ENCODE measurements at regions of chr4 and their contacts with region 1.

Region 1: DNA sequence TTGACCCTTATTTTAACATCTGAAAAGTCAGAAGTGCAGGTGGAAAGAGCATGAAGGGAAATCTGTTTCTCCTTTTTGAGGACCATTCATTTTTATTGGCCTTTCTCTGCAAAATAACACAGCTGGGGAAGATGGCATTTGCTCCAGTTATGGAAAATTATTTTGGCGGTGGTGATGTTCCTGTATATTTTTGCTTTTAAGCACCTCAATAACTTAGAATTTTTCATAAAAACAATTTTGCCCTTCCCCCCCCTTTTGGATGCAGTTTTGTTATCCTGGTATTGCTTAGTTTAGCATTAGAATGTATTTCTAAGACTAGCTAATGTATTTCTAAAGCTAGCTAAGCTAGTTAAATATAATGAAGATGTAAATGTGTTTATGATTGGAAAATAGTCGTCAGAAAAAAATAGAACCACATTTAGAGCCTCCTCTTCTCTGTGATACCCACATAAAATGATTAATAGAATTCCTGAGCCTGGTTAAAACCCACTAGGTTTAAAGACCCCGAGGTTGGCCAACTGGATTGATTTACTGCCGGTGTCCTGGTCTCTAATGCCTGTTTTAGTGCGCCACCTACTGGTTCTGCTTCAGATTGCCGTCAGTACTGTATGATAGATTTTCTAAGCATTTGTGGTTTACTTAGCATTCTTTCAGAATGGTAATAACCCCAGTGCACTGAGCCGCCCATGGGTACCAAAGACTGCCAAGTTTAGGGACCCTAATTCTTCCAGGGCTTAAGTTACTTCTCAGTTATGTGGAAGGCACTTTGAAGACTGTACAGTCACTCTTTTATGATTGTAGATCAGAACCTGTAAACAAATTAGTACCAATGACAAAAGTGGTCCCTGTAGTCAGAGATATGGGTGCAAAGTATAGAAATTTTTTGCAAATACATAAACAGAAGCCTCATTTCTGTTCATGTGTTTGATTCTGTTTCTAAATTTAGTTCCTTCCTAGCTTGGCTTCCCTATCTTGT is 11.4 kb downstream of the KLF3 start:
- DNase-seq: no peak
- ATAC-seq: peak; percentile 49

Region 2: GRCh38 chr4:38069271-38069760 is 606.1 kb before region 1 on chr4:
- intact Hi-C with region 1: loop called (anchors 2 kb)
- DNase-seq: no peak
- ATAC-seq: peak; percentile 41

Region 3: GRCh38 chr4:38179690-38180377 is 495.6 kb before region 1 on chr4:
- intact Hi-C with region 1: loop called (anchors 2 kb)
- DNase-seq: no peak
- ATAC-seq: peak; percentile 51

Region 4: GRCh38 chr4:38455092-38455862 is 220.2 kb before region 1 on chr4:
- intact Hi-C with region 1: no loop called
- DNase-seq: no peak
- ATAC-seq: no peak

Region 5: DNA sequence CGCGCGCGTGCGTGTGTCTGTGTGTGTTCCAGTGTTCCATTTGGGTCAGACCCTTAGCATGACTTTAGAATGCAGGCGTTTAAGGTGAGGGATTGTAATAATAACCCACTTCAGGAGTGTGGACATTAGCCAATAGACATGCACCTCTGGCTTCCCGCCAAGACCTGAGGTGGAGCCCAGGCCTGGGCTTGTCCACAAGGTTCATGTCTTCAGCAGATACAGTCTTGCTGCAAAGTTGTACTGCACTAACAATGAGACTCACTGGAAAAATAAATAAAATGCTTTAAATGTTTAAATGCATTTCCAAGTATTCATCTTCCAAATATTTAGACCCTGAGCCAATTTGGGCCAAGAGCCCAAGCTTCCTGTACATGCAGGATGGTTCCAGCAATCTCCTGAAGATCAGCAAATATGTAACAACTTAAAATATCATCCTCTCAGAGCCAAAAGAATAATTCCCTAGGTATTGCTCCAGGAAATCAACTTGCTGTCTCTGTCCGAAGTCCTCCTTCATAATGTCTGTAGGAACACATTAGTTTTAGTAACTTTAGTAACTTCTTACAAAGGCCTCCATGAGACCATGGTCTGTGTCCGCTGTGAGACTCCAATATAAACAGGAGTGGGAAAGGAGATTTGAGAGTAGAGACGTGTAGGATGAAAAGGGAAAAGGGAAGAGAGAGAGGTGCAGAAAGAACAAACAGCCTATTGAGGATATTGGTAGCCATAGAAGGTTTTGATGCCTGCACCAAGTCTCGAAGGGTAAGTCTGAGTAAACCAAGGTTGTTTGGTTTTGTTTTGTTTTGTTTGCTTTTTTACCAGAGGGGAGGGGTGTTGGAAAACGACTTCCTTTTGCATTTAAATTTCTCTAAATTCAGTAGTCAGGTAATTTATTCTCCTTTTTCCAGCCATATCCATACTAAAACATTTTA is 109.9 kb before region 1 on chr4:
- intact Hi-C with region 1: loop called (anchors 5 kb)
- DNase-seq: no peak
- ATAC-seq: no peak

Region 6: DNA sequence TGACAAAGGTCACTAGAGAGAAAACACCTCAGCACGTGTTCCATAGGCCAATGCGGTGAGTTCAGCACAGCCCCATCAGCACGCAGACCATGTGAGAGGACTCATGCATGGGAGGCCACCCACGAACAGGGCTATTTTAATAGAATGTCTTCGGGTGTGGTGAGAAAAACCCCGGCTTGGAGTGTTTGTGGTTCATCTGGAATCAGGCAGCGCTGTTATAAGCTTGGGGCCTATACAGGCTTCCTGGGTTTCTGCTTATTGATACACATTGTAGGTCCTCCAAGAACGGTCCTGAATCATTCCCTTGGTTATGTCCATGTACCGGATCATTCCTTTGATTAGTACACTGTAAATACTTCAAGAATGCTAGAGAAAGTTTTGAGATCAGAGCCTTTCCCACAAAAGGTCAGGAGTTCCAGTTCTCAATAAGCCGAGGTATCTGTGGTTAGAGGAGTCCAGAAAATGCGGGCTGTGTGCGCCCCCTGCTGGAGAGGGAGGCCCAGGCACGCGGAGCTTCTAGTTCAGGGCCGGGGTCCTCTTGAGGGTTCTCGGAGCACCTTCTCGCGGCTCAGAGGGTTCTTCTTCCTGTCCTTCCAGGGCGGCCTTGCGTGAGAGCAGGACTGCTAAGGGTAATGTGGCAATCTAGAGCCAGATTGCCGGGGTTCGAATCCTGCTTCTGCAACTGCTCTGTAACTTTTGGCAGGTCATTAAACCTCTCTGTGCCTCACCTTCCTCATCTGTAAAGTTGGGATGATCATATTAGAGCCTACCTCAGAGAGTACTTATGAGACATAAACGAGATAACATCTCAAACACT is 55.6 kb after region 1 on chr4:
- intact Hi-C with region 1: loop called (anchors 5 kb)
- DNase-seq: peak; percentile 92
- ATAC-seq: peak; percentile 85

Measured in Right ventricle myocardium inferior (tissue), 1 donor.